Posterior vena cava (tissue), 2 donors: ENCODE measurements at regions of chr11 and their contacts with region 1.

Region 1: GRCh38 chr11:102177974-102178631 is 67.9 kb downstream of the YAP1 start:
- DNase-seq: no peak

Region 2: DNA sequence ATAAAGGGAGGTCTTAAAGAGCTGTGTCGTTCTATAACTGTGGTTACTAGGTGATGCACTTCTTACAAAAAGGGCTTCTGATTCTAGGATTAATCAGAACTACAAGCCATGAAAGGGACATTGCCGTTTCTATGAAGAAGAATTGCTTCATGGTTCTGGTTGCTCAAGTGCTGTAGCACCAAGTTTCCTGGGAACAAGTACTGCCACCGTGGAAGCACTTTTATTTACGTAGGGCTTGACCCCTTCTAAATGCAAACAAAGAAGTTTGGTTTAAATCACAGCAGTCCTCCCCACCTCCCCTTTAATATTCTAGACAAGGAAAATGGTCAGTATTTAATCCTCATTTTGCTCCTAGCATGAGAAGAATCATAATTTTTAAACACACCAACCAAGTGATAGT is 58.1 kb before region 1 on chr11:
- intact Hi-C with region 1: loop called (anchors 10 kb)
- DNase-seq: no peak

Region 3: GRCh38 chr11:102139081-102139498 is 39.0 kb before region 1 on chr11:
- intact Hi-C with region 1: loop called in 1 of 2 experiments (anchors 5 kb)
- DNase-seq: no peak